HEK293T (cell line): ENCODE measurements at regions of chr17 and their contacts with region 1.

Region 1: GRCh38 chr17:29568331-29569244 is at the start of gene TP53I13:
- DNase-seq: peak; percentile 77

Region 2: GRCh38 chr17:29579866-29580771 is 11.5 kb after region 1 on chr17:
- CTCF ChIA-PET with region 1: interaction called, 5 read pairs
- POLR2A ChIA-PET with region 1: interaction called, 11 read pairs
- DNase-seq: peak; percentile 75

Region 3: GRCh38 chr17:29611311-29612053 is 42.9 kb after region 1 on chr17:
- CTCF ChIA-PET with region 1: no interaction called
- POLR2A ChIA-PET with region 1: no interaction called
- DNase-seq: no peak